ENCODE measurements at regions of chr17 and their contacts with region 1.

Region 1: DNA sequence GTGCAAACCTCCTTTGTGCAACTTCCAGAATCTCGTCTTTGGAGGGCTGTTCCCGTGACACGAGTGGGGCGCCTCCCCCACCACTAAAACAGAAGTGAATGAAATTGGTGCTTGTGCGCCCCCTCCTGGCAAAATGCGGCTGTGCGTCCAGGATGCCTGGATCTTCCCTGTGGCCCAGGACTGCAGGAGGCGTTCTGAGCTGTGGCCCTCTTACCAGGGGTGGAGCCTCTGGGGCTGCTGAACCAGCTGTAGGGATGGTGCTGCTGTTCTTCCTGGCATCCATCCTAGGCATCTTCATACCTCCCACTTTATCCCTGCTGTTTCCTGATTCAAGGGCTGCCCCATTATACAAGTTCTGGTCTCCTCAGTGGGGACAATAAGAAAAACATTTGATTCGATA is 18.5 kb upstream of the NAGLU start:
- DNase-seq: no peak
- H3K4me3 ChIP-seq: no peak overlapping the region
- H3K27ac ChIP-seq: peak overlapping the region; percentile 95
- H3K4me1 ChIP-seq: peaks cover 85% of the 10 kb centered on the region
- H3K27me3 ChIP-seq: no peaks in the 10 kb centered on the region
- CTCF ChIP-seq: peak; percentile 89 to 96 (median 94)
- POLR2A ChIP-seq: no peak

Region 2: GRCh38 chr17:42322382-42323267 is 194.9 kb before region 1 on chr17:
- intact Hi-C with region 1: loop called (anchors 5 kb)
- DNase-seq: no peak
- H3K4me3 ChIP-seq: no peak overlapping the region
- H3K27ac ChIP-seq: peak overlapping the region; percentile 22
- H3K4me1 ChIP-seq: peaks cover 13% of the 10 kb centered on the region
- H3K27me3 ChIP-seq: no peaks in the 10 kb centered on the region
- CTCF ChIP-seq: peak; percentile 99 to 100 (median 100)
- POLR2A ChIP-seq: no peak

Region 3: GRCh38 chr17:42405963-42406495 is 111.5 kb before region 1 on chr17:
- intact Hi-C with region 1: loop called (anchors 5 kb)
- DNase-seq: no peak
- H3K4me3 ChIP-seq: no peak overlapping the region
- H3K27ac ChIP-seq: peak overlapping the region; percentile 90
- H3K4me1 ChIP-seq: peaks cover 75% of the 10 kb centered on the region
- H3K27me3 ChIP-seq: no peaks in the 10 kb centered on the region
- CTCF ChIP-seq: peak; percentile 78 to 82 (median 81)
- POLR2A ChIP-seq: no peak

Region 4: DNA sequence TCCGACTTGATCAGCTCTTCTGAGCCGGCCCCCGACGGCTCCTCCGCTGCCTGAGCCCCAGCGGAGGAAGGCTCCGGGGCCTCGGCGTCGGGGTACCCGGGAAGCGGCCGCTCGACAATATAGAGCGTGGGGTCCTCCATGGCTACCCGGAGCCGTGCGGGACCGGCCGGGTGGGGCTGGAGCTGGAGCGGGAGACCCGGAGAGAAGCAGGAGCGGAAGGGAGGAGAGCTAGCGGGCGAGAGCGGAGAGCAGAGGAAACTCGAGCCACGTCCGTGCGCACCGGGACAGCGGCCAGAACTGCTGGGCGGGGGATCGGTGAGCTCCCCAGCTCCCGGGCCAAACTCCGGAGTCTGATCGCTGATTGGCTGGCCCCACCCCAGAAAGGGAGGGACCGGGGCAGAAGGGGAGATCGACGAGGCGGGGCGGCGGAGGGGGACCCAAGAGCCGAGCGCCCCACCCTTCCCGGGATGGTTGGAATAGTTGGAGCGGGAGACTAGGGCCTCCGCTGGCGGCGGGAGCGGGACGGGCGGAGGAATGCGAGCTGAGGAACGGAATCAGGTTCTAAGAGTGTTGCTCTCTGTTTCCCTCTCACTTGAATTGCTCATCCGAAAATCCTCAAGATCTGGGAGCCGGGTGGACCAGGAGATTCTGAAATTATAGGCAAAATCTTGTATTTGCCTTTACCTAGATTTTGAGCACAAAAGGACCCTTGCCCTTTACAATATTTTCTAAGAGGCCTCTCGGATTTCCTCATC is 94.4 kb before region 1 on chr17 and contains the start of gene CAVIN1:
- intact Hi-C with region 1: loop called (anchors 5 kb)
- DNase-seq: peak in 1 of 2 donors; percentile 98
- H3K4me3 ChIP-seq: peak within 1 kb of the TSS; percentile 93
- H3K27ac ChIP-seq: peak within 1 kb of the TSS; percentile 96
- H3K4me1 ChIP-seq: peaks cover 57% of the 10 kb centered on the region
- H3K27me3 ChIP-seq: no peaks in the 10 kb centered on the region
- CTCF ChIP-seq: no peak
- POLR2A ChIP-seq: peak in 1 of 2 donors; percentile 97
- total RNA-seq, gene CAVIN1: 268 TPM

Region 5: DNA sequence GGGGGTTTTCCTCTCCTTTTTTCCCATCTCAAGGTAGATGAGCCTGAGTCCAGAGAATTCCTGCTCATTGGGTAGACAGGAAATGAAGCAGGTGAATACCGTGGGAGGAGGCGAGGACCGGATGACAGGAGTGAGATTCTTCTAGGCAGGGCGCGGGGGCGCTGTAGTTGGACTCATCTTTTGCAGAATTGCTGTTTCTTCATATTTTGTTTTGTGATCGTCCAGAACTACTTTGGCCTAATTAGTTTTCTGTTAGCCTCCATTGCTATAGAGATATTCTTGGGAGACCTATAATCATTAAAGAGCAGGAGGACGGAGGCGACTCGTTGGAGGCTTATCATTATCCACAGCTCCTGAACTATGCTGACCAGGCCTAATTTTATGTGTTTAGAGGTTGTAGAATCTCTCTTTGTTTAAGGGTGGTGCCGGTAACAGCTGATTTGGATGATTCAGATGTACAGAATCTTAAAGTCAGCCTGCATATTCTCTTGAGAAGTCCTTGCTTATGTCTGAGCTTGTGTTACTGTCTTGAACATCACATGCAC is 58.2 kb before region 1 on chr17:
- intact Hi-C with region 1: loop called (anchors 5 kb)
- DNase-seq: no peak
- H3K4me3 ChIP-seq: peak overlapping the region; percentile 58 to 77
- H3K27ac ChIP-seq: peak overlapping the region; percentile 97
- H3K4me1 ChIP-seq: peaks cover 41% of the 10 kb centered on the region
- H3K27me3 ChIP-seq: no peaks in the 10 kb centered on the region
- CTCF ChIP-seq: no peak
- POLR2A ChIP-seq: no peak